Dendritic cell treated with granulocyte-macrophage colony-stimulating factor and Interleukin-4, amounts not matched to agents 40 ng/mL and 50 ng/mL, for 4 days (primary cell): ENCODE measurements at regions of chr1 and their contacts with region 1.

Region 1: GRCh38 chr1:45501505-45501859 is 1.4 kb downstream of the MMACHC start:
- H3K4me3 Mint-ChIP-seq: no peak overlapping the region
- H3K27ac Mint-ChIP-seq: no peak overlapping the region
- H3K4me1 Mint-ChIP-seq: peaks cover 25% of the 10 kb centered on the region
- H3K27me3 Mint-ChIP-seq: no peaks in the 10 kb centered on the region

Region 2: DNA sequence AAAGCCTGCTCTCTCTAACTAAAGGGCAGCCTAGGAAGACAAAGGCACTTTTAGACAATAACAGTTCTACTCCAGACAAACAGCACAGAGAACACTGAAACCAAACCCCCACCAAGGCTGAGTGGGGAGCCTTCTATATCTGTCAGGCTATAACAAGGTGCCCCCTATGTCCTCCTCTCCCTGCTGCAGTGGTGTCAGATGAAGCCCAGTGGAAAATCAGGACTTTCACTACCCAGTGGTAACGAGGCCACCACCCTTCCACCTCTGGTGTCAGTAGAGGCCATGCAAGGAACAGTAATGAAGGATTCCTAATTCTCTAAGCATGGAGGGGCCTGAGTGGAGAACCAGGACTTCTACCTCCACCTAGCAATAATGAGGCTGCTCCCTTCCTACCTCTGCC is 378.8 kb before region 1 on chr1:
- intact Hi-C with region 1: no loop called
- H3K4me3 Mint-ChIP-seq: no peak overlapping the region
- H3K27ac Mint-ChIP-seq: no peak overlapping the region
- H3K4me1 Mint-ChIP-seq: no peaks in the 10 kb centered on the region
- H3K27me3 Mint-ChIP-seq: peaks cover 2% of the 10 kb centered on the region

Region 3: GRCh38 chr1:45339789-45340570 is 161.5 kb before region 1 on chr1 and contains the starts of genes MUTYH and TOE1:
- intact Hi-C with region 1: loop called (anchors 5 kb)
- H3K4me3 Mint-ChIP-seq: peak within 1 kb of the TSS; percentile 89
- H3K27ac Mint-ChIP-seq: peak within 1 kb of the TSS; percentile 95
- H3K4me1 Mint-ChIP-seq: peaks cover 43% of the 10 kb centered on the region
- H3K27me3 Mint-ChIP-seq: no peaks in the 10 kb centered on the region

Region 4: GRCh38 chr1:45750298-45751038 is 249.0 kb after region 1 on chr1 and contains the start of gene IPP:
- intact Hi-C with region 1: no loop called
- H3K4me3 Mint-ChIP-seq: peak within 1 kb of the TSS; percentile 85
- H3K27ac Mint-ChIP-seq: peak within 1 kb of the TSS; percentile 100
- H3K4me1 Mint-ChIP-seq: peaks cover 19% of the 10 kb centered on the region
- H3K27me3 Mint-ChIP-seq: no peaks in the 10 kb centered on the region